ENCODE measurements at regions of chr7 and their contacts with region 1.

Region 1: DNA sequence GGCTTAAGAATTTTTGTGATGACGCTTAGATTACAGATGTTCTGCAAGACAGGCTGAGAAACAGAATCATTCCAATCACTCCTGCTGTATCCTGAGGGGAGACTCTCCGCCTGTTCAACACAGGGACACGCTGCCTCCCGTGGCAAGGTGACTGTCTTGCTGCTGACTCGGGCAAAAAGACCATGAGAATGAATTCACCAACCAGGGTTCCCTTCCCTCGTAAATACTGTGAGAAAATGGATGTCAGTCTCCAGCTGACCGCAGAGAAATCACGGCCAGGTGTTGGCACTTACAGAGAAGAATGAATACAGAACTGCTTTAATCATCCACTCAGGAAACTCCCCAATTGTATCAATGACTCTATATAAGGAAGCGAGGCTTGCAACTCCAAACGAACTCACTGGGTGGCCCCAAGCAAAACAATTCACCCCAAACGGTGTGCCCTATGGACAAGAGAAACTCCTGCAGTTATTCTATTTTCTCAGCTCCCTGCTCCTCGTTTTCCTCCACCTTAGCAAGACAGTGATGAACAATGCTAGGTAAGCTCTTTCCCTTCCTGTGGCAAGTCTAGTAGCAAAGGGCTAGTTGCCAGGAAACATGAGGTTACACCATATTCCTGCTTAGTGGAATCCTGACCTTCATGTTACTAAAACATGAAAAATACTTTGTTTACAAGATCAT is 22.8 kb downstream of the GNA12 start:
- DNase-seq: peak; percentile 65
- CTCF ChIP-seq: peak; percentile 3

Region 2: DNA sequence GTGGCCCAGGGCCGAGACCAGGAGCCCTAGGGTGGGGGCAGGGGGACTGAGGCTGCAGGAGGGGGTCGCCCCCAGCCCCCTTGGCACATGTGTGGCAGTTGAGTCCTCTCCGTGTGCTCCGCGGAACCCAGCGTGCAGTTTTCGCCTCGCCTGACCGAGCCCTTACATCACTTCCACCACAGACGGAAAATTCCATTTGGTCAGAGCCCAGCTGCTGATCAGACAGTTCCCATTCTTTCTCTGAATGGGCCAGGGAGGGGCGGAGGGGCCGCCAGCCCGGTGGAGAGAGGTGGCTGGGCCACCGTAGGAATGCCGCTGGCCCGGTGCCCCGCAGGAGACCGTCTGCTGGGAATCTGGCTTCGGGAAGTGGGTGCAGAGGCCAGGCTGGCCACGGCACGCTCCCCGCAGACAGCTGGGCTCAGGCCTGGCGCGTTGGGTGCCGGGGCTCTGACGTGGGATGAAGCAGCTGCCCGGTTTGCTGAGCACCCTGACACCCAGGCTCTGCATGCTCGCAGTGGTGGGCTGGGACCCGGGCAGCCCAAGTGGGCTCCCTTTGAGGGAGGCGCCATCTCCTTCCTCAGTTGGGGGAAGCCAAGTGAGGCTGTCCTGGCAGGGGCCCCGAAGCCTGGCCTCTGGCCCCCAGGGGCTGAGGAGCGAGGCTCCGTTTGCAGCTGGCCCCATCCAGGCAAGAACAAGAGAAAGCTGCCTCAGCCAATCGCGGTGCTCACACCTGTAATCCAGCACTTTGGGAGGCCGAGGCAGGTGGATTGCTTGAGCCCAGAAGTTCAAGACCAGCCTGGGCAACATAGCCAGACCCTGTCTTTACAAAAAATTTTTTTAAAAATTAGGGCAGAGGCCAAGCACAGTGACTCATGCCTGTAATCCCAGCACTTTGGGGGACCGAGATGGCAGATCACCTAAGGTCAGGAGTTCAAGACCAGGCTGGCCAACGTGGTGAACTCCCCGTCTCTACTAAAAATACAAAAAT is 179.6 kb before region 1 on chr7:
- CTCF ChIA-PET with region 1: no interaction called
- POLR2A ChIA-PET with region 1: no interaction called
- DNase-seq: peak; percentile 77
- CTCF ChIP-seq: no peak

Region 3: GRCh38 chr7:2771274-2771731 is 50.0 kb before region 1 on chr7:
- CTCF ChIA-PET with region 1: no interaction called
- POLR2A ChIA-PET with region 1: no interaction called
- DNase-seq: no peak
- CTCF ChIP-seq: no peak

Region 4: GRCh38 chr7:2805213-2805944 is 15.9 kb before region 1 on chr7:
- CTCF ChIA-PET with region 1: interaction called, 11 read pairs
- POLR2A ChIA-PET with region 1: no interaction called
- DNase-seq: no peak
- CTCF ChIP-seq: no peak

Region 5: GRCh38 chr7:2832486-2832885 is 11.2 kb after region 1 on chr7:
- CTCF ChIA-PET with region 1: no interaction called
- POLR2A ChIA-PET with region 1: no interaction called
- DNase-seq: no peak
- CTCF ChIP-seq: no peak